Activated CD8-positive, alpha-beta T cell treated with anti-CD3 and anti-CD28 coated beads for 36 hours (primary cell): ENCODE measurements at regions of chr15 and their contacts with region 1.

Region 1: GRCh38 chr15:80776420-80777045 is 2.6 kb upstream of the CEMIP start:
- DNase-seq: peak; percentile 78
- ATAC-seq: no peak
- H3K4me3 Mint-ChIP-seq: no peak overlapping the region
- H3K27ac Mint-ChIP-seq: no peak overlapping the region
- H3K4me1 Mint-ChIP-seq: peaks cover 6% of the 10 kb centered on the region
- H3K27me3 Mint-ChIP-seq: peaks cover 39% of the 10 kb centered on the region
- CTCF ChIP-seq: peak; percentile 85

Region 2: DNA sequence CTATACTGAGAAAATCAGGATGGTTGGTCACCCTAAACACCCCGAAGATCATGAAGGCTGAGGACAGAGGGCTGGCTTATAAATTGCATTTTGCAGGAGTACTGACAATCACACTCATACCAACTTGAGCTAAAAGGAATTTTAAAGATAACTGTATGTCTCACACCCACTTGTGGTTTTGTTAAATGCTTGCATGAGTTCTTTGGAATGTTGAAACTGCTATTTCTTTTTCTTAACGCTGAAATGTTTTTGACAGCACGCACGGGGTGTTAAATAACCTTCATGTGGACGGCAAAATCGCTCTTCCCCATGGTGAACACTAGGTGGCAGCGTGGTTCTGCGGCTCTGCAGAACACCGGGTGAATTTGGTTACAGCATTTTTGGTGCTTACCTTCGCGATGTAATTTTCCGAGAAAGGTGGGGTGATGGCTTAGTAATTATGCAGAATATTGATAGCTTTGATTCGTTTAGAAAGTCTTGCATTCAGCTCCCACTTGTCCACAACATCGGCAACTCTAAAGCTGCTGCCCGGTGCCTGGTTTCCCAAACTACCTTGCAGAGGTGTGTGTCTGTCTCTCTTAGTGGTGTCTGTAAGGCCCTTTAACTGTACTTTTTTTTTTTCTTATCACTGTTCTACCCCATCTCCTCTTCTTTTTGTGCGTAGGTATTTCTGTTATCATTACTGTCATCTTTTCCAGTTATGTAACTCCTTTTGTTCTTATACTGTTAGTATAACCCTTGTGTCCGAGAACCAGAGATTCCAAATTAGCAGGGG is 320.7 kb before region 1 on chr15:
- CTCF ChIA-PET with region 1: interaction called, 104 read pairs
- POLR2A ChIA-PET with region 1: no interaction called
- intact Hi-C with region 1: loop called (anchors 2 kb)
- DNase-seq: peak; percentile 63
- ATAC-seq: peak; percentile 80
- H3K4me3 Mint-ChIP-seq: no peak overlapping the region
- H3K27ac Mint-ChIP-seq: no peak overlapping the region
- H3K4me1 Mint-ChIP-seq: no peaks in the 10 kb centered on the region
- H3K27me3 Mint-ChIP-seq: peaks cover 8% of the 10 kb centered on the region
- CTCF ChIP-seq: peak; percentile 93

Region 3: DNA sequence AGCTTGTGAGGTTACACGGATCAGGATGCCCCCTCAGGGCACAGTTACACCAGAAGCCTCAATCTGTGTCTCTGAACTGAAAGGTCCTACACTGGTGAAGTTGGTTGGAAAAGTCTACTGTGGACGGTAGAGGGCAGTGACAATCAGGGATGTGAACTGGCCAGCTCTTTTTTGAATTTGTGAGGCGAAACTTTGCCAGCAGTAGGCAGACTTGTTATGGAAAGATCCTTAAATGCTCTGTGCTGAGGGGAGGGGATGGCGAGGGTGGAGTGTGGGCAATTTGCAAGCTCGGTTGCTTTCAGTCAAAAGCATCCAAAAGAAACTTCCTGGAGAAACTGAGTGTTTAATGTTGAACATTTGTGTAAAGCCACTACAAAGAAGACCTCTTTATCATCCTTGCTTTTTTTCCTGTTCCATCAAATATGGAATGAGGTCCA is 208.8 kb before region 1 on chr15:
- CTCF ChIA-PET with region 1: interaction called, 24 read pairs
- POLR2A ChIA-PET with region 1: no interaction called
- intact Hi-C with region 1: loop called (anchors 5 kb)
- DNase-seq: peak; percentile 40
- ATAC-seq: no peak
- H3K4me3 Mint-ChIP-seq: no peak overlapping the region
- H3K27ac Mint-ChIP-seq: no peak overlapping the region
- H3K4me1 Mint-ChIP-seq: no peaks in the 10 kb centered on the region
- H3K27me3 Mint-ChIP-seq: peaks cover 7% of the 10 kb centered on the region
- CTCF ChIP-seq: peak; percentile 47

Region 4: GRCh38 chr15:80695104-80695910 is 81.2 kb before region 1 on chr15 and contains the start of gene ABHD17C:
- CTCF ChIA-PET with region 1: interaction called, 10 read pairs
- POLR2A ChIA-PET with region 1: no interaction called
- intact Hi-C with region 1: no loop called
- DNase-seq: peak; percentile 49
- ATAC-seq: peak; percentile 76
- H3K4me3 Mint-ChIP-seq: peak within 1 kb of the TSS; percentile 82
- H3K27ac Mint-ChIP-seq: peak within 1 kb of the TSS; percentile 80
- H3K4me1 Mint-ChIP-seq: peaks cover 20% of the 10 kb centered on the region
- H3K27me3 Mint-ChIP-seq: peaks cover 2% of the 10 kb centered on the region
- CTCF ChIP-seq: no peak
- total RNA-seq, gene ABHD17C: 5.4 to 5.6 TPM

Region 5: DNA sequence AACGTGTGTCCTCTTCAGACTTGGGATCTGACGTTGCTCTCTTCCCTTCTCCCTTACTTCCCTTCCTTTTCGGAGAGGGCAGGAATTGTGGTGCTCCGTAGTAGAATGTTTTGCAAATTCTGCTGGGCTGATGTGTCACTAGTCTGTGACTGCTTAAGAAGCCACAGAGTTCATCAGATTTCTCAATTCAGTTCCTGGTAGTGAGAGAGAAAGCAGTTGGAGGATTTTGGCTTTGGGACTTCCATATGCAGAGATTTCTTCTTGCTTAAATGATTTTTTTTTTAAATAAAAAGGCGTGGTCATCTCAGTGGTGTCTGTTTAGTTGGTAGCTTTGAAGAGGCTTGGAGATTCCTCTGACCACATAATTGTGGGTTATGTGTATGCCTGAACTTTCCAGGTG is 12.8 kb after region 1 on chr15:
- CTCF ChIA-PET with region 1: interaction called, 19 read pairs
- POLR2A ChIA-PET with region 1: no interaction called
- intact Hi-C with region 1: no loop called
- DNase-seq: no peak
- ATAC-seq: no peak
- H3K4me3 Mint-ChIP-seq: no peak overlapping the region
- H3K27ac Mint-ChIP-seq: no peak overlapping the region
- H3K4me1 Mint-ChIP-seq: no peaks in the 10 kb centered on the region
- H3K27me3 Mint-ChIP-seq: peaks cover 18% of the 10 kb centered on the region
- CTCF ChIP-seq: no peak

Region 6: DNA sequence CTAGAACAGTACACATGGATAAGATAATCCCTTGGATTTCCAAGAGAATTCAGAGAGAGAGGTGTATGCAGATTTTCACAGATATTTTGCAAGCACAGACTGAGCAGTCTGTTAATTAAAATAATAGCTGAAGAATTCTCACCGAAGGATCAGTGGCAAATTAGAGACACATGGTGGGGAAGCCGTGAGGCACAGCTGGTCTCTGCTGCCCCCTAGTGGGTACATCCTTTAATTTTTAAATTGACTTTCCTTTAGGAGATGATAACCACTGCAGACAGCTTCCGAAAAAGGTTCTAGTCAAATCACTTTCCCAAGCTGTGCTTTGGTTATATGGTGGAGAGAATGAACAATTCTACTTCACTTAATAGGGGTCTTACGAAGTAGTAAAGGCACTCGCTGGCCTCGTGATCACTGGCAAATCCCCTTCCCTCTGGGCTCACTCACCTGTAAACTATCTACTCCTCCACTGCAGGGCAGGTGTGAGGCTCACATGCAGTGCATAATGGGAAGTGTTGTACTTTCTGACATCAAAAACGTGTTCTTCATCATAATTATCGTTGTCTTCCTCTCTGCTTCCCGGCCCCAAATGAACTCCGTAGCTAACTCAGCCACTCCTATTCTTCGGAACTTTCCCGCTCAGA is 193.6 kb after region 1 on chr15:
- CTCF ChIA-PET with region 1: interaction called, 65 read pairs
- POLR2A ChIA-PET with region 1: no interaction called
- intact Hi-C with region 1: loop called (anchors 5 kb)
- DNase-seq: peak; percentile 74
- ATAC-seq: peak; percentile 65
- H3K4me3 Mint-ChIP-seq: no peak overlapping the region
- H3K27ac Mint-ChIP-seq: no peak overlapping the region
- H3K4me1 Mint-ChIP-seq: peaks cover 8% of the 10 kb centered on the region
- H3K27me3 Mint-ChIP-seq: no peaks in the 10 kb centered on the region
- CTCF ChIP-seq: peak; percentile 91